PC-9 (cell line): ENCODE measurements at regions of chr5 and their contacts with region 1.

Region 1: GRCh38 chr5:93582677-93583438 is at the start of gene NR2F1:
- DNase-seq: peak; percentile 46 to 96
- H3K4me3 ChIP-seq: peak within 1 kb of the TSS; percentile 96
- H3K27ac ChIP-seq: peak within 1 kb of the TSS; percentile 79
- H3K4me1 ChIP-seq: peaks cover 17% of the 10 kb centered on the region
- H3K27me3 ChIP-seq: no peaks in the 10 kb centered on the region
- CTCF ChIP-seq: peak; percentile 79
- total RNA-seq, gene NR2F1: 1.1 and 1.3 TPM in 2 replicates

Region 2: GRCh38 chr5:92909602-92909962 is 673.3 kb before region 1 on chr5:
- CTCF ChIA-PET with region 1: no interaction called
- POLR2A ChIA-PET with region 1: no interaction called
- intact Hi-C with region 1: loop called (anchors 5 kb)
- DNase-seq: no peak
- H3K4me3 ChIP-seq: no peak overlapping the region
- H3K27ac ChIP-seq: no peak overlapping the region
- H3K4me1 ChIP-seq: peaks cover 12% of the 10 kb centered on the region
- H3K27me3 ChIP-seq: no peaks in the 10 kb centered on the region
- CTCF ChIP-seq: peak; percentile 36; the same call in 1 of the 2 replicates

Region 3: GRCh38 chr5:93189707-93190120 is 393.1 kb before region 1 on chr5:
- CTCF ChIA-PET with region 1: no interaction called
- POLR2A ChIA-PET with region 1: no interaction called
- intact Hi-C with region 1: loop called (anchors 10 kb)
- DNase-seq: peak; percentile 31 to 97
- H3K4me3 ChIP-seq: no peak overlapping the region
- H3K27ac ChIP-seq: peak overlapping the region; percentile 75
- H3K4me1 ChIP-seq: peaks cover 60% of the 10 kb centered on the region
- H3K27me3 ChIP-seq: no peaks in the 10 kb centered on the region
- CTCF ChIP-seq: no peak

Region 4: GRCh38 chr5:93596676-93597461 is 14.0 kb after region 1 on chr5:
- CTCF ChIA-PET with region 1: no interaction called
- POLR2A ChIA-PET with region 1: interaction called, 21 read pairs
- intact Hi-C with region 1: no loop called
- DNase-seq: peak in 1 of 2 experiments; percentile 84
- H3K4me3 ChIP-seq: no peak overlapping the region
- H3K27ac ChIP-seq: no peak overlapping the region
- H3K4me1 ChIP-seq: no peaks in the 10 kb centered on the region
- H3K27me3 ChIP-seq: no peaks in the 10 kb centered on the region
- CTCF ChIP-seq: no peak

Region 5: GRCh38 chr5:94111209-94112004 is 528.5 kb after region 1 on chr5:
- CTCF ChIA-PET with region 1: no interaction called
- POLR2A ChIA-PET with region 1: no interaction called
- intact Hi-C with region 1: loop called (anchors 10 kb)
- DNase-seq: peak; percentile 92 to 95
- H3K4me3 ChIP-seq: peak overlapping the region; percentile 82
- H3K27ac ChIP-seq: peak overlapping the region; percentile 64
- H3K4me1 ChIP-seq: peaks cover 11% of the 10 kb centered on the region
- H3K27me3 ChIP-seq: no peaks in the 10 kb centered on the region
- CTCF ChIP-seq: no peak; the same call in 1 of the 2 replicates

Region 6: GRCh38 chr5:94849821-94850736 is 1267.2 kb after region 1 on chr5:
- CTCF ChIA-PET with region 1: no interaction called
- POLR2A ChIA-PET with region 1: no interaction called
- intact Hi-C with region 1: loop called (anchors 1 kb)
- DNase-seq: peak; percentile 12 to 51
- H3K4me3 ChIP-seq: no peak overlapping the region
- H3K27ac ChIP-seq: no peak overlapping the region
- H3K4me1 ChIP-seq: no peaks in the 10 kb centered on the region
- H3K27me3 ChIP-seq: no peaks in the 10 kb centered on the region
- CTCF ChIP-seq: peak; percentile 78